Activated T-helper 2 cell treated with anti-CD3 and anti-CD28 coated beads, Interferon-gamma antibody, Interleukin-2, Interleukin-4, amounts not matched to agents 10 μg/mL and 5 μg/mL and 100 μg/mL, durations not matched to agents 14 hours and 24 hours and 36 hours (primary cell): ENCODE measurements at regions of chr1 and their contacts with region 1.

Region 1: GRCh38 chr1:99691175-99691574 is 45.3 kb downstream of the PALMD start:
- DNase-seq: no peak
- H3K4me3 Mint-ChIP-seq: no peak overlapping the region
- H3K27ac Mint-ChIP-seq: no peak overlapping the region
- H3K4me1 Mint-ChIP-seq: no peaks in the 10 kb centered on the region
- H3K27me3 Mint-ChIP-seq: peaks cover 22% of the 10 kb centered on the region

Region 2: GRCh38 chr1:99590578-99591209 is 100.5 kb before region 1 on chr1:
- intact Hi-C with region 1: no loop called
- DNase-seq: no peak
- H3K4me3 Mint-ChIP-seq: no peak overlapping the region
- H3K27ac Mint-ChIP-seq: no peak overlapping the region
- H3K4me1 Mint-ChIP-seq: no peaks in the 10 kb centered on the region
- H3K27me3 Mint-ChIP-seq: no peaks in the 10 kb centered on the region

Region 3: DNA sequence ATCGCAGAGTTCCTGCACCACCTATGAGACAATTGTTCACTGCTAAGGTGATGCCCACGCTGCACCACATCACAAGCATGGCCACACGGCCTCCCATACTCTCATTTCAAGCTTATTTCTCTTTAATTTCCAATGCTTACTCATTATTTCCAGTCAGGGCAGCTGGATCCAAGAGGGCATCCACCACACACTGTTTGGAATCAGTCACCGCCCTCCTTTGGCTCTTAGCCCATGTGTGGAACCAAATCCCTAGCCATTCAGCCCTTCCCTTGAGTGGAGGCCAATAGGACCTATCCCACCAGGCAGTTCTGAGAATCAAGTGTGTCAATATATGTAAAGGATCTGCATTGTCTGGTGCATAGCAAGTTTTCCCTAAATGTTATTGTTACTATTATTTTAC is 71.6 kb before region 1 on chr1:
- intact Hi-C with region 1: loop called (anchors 10 kb)
- DNase-seq: no peak
- H3K4me3 Mint-ChIP-seq: no peak overlapping the region
- H3K27ac Mint-ChIP-seq: no peak overlapping the region
- H3K4me1 Mint-ChIP-seq: no peaks in the 10 kb centered on the region
- H3K27me3 Mint-ChIP-seq: no peaks in the 10 kb centered on the region